B cell (primary cell): ENCODE measurements at regions of chr4 and their contacts with region 1.

Region 1: DNA sequence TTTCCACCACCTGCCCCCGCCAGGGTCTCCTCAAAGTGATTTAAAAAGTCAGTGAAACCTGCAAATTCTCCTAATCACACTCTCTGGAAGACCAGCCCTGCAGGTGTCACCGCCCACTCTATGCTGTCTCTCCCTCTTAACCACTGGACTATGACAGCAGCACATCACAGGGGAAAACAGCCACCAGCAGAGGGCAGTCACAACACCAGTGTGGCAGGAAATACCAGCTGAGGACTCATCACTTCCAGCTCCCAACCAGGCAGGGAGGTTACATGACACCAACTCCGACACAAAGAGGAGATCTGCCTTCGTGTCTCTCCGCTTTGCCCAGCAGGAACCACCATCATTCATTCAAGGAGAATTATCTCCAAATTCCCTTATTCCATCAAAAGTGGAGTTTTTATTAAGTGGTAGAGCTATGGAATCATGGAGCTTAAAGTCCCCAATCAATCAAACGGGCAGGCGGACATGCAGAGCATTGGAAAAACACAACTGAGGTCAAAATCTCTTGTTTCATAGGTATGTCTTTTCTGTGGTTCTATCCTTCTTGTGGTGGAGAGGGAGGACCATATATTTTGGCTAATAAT is 91.3 kb downstream of the NSUN7 start:
- DNase-seq: peak; percentile 79
- ATAC-seq: peak; percentile 57
- H3K4me3 ChIP-seq: peak overlapping the region in 1 of 5 experiments; percentile 37
- H3K4me3 Mint-ChIP-seq: peak overlapping the region; percentile 77
- H3K27ac ChIP-seq: peak overlapping the region; percentile 53 to 56
- H3K27ac Mint-ChIP-seq: peak overlapping the region; percentile 88
- H3K4me1 ChIP-seq: peaks cover 33 to 47% of the 10 kb centered on the region in 2 donors
- H3K4me1 Mint-ChIP-seq: peaks cover 42% of the 10 kb centered on the region
- H3K27me3 ChIP-seq: no peaks in the 10 kb centered on the region
- H3K27me3 Mint-ChIP-seq: peaks cover 2% of the 10 kb centered on the region
- CTCF ChIP-seq: peak; percentile 65

Region 2: DNA sequence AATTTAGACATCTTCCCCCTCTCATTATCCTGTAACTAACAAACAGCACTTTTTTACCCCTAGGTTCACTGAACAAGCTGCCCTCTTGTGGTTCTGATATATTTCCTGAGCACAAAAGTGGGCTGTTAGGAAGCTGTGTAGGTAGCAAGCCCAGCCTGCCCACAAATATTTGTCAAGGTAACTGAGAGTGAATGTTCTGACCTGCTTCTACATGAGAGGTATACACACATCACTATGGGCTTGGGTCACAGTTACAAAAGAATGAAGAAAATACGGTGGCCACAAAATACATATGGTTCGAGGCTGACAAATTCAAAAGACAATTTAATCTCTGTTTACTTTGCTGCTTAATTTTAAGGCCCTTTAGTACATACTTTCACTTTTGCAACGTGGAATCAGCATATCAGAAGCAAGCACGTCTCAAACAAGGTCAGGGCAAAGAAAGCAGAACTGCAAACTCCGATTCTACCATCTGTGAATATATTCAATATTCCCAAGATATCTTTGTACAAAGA is 290.1 kb before region 1 on chr4:
- CTCF ChIA-PET with region 1: no interaction called
- POLR2A ChIA-PET with region 1: no interaction called
- intact Hi-C with region 1: loop called (anchors 10 kb)
- DNase-seq: peak; percentile 80
- ATAC-seq: peak; percentile 82
- H3K4me3 ChIP-seq: peak overlapping the region; percentile 11 to 72 (median 56)
- H3K4me3 Mint-ChIP-seq: peak overlapping the region; percentile 84
- H3K27ac ChIP-seq: peak overlapping the region; percentile 77 to 84
- H3K27ac Mint-ChIP-seq: peak overlapping the region; percentile 88
- H3K4me1 ChIP-seq: peaks cover 17 to 21% of the 10 kb centered on the region in 2 donors
- H3K4me1 Mint-ChIP-seq: peaks cover 32% of the 10 kb centered on the region
- H3K27me3 ChIP-seq: no peaks in the 10 kb centered on the region
- H3K27me3 Mint-ChIP-seq: no peaks in the 10 kb centered on the region
- CTCF ChIP-seq: peak; percentile 59

Region 3: GRCh38 chr4:40607221-40607620 is 233.9 kb before region 1 on chr4:
- CTCF ChIA-PET with region 1: no interaction called
- POLR2A ChIA-PET with region 1: no interaction called
- intact Hi-C with region 1: no loop called
- DNase-seq: no peak
- ATAC-seq: no peak
- H3K4me3 ChIP-seq: no peak overlapping the region
- H3K4me3 Mint-ChIP-seq: no peak overlapping the region
- H3K27ac ChIP-seq: no peak overlapping the region
- H3K27ac Mint-ChIP-seq: no peak overlapping the region
- H3K4me1 ChIP-seq: no peaks in the 10 kb centered on the region
- H3K4me1 Mint-ChIP-seq: no peaks in the 10 kb centered on the region
- H3K27me3 ChIP-seq: no peaks in the 10 kb centered on the region
- H3K27me3 Mint-ChIP-seq: no peaks in the 10 kb centered on the region
- CTCF ChIP-seq: no peak

Region 4: DNA sequence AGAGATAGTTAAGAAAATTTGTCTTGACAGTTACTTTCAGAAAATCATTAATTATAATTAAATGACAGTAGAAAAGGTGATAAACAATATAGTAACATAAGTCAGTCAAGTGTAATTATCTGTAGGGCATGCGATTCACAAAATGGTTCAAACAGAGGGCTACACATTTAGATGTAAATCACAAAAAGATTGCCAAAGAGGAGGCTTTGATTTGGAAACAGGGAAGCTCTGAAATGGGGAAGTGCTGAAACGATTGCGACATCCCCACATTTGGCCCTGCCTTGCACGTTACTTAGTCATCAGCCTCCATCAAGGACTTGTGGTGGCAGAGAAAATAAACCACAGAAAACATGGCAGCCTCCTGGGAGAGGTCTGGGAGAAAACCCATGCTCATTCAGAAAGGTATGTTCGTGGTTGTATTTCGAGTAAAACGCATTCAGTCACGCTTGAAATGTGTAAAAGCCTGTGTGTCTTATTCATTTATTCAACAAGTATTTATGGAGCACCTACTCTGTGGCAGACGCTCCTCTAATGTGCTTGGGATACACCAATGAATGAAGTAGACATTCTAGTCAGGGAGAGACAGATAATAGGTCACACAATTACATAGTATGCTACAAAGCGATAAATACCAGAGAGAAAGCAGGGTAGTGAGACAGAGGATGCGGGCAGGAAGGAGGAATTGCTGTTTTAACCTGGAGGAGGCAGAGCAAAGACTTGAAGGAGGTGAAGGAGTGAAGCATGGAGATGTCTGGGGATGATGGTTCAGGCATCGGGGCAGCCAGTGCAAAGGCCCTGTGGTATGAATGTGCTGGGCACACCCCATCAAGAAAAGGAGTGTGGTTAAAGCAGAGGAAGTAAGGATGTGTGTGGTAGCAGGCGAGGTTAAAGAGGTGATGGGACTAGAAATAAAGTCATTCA is 219.2 kb before region 1 on chr4:
- CTCF ChIA-PET with region 1: no interaction called
- POLR2A ChIA-PET with region 1: no interaction called
- intact Hi-C with region 1: no loop called
- DNase-seq: peak; percentile 75
- ATAC-seq: peak; percentile 88
- H3K4me3 ChIP-seq: peak overlapping the region in 1 of 5 experiments; percentile 5
- H3K4me3 Mint-ChIP-seq: peak overlapping the region; percentile 47
- H3K27ac ChIP-seq: no peak overlapping the region
- H3K27ac Mint-ChIP-seq: peak overlapping the region; percentile 62
- H3K4me1 ChIP-seq: peaks cover 12 to 17% of the 10 kb centered on the region in 2 donors
- H3K4me1 Mint-ChIP-seq: peaks cover 14% of the 10 kb centered on the region
- H3K27me3 ChIP-seq: no peaks in the 10 kb centered on the region
- H3K27me3 Mint-ChIP-seq: peaks cover 3% of the 10 kb centered on the region
- CTCF ChIP-seq: no peak

Region 5: GRCh38 chr4:40749717-40750460 is 91.2 kb before region 1 on chr4 and contains the start of gene NSUN7:
- CTCF ChIA-PET with region 1: interaction called, 8 read pairs
- POLR2A ChIA-PET with region 1: interaction called, 4 read pairs
- intact Hi-C with region 1: loop called (anchors 5 kb)
- DNase-seq: peak; percentile 80
- ATAC-seq: peak; percentile 82
- H3K4me3 ChIP-seq: peak within 1 kb of the TSS; percentile 49 to 74 (median 61)
- H3K4me3 Mint-ChIP-seq: peak within 1 kb of the TSS; percentile 83
- H3K27ac ChIP-seq: peak within 1 kb of the TSS in 1 of 2 donors; percentile 56
- H3K27ac Mint-ChIP-seq: peak within 1 kb of the TSS; percentile 76
- H3K4me1 ChIP-seq: peaks cover 6 to 18% of the 10 kb centered on the region in 2 donors
- H3K4me1 Mint-ChIP-seq: peaks cover 12% of the 10 kb centered on the region
- H3K27me3 ChIP-seq: peaks cover 0 to 24% (median 10%) of the 10 kb centered on the region in 4 experiments
- H3K27me3 Mint-ChIP-seq: peaks cover 24% of the 10 kb centered on the region
- CTCF ChIP-seq: no peak
- total RNA-seq, gene NSUN7: 29.8 and 33.1 TPM in 2 replicates

Region 6: DNA sequence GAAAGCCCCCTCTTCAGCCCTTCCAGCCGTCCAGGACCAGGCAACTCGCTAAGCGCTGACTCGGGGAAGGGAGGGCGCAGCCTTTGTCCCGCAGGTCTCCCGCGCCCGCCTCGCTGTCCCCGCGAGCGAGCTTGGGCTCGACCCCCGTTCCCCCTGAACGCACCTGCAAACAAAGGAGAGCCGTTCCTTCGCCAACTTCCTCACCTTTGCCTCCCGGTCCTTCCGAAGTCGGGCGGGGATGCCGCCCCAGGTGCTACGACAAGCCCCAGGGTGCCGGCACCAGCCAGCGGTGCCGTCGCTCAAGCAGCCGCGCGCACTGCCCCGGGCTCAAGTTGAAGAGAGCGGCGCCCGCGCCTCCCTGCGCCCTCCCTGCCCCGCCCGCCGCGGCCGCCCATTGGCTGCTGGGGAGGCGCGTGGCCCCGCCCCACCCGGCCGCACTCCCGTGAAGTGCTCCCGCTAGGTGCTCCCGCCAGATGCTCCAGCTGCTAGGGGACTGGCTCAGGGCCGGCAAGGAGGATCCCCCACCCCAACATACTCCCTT is 15.8 kb after region 1 on chr4:
- CTCF ChIA-PET with region 1: interaction called, 39 read pairs
- POLR2A ChIA-PET with region 1: interaction called, 9 read pairs
- intact Hi-C with region 1: loop called (anchors 1 kb)
- DNase-seq: peak; percentile 78
- ATAC-seq: peak; percentile 95
- H3K4me3 ChIP-seq: peak overlapping the region; percentile 50 to 76 (median 69)
- H3K4me3 Mint-ChIP-seq: peak overlapping the region; percentile 88
- H3K27ac ChIP-seq: peak overlapping the region; percentile 40
- H3K27ac Mint-ChIP-seq: peak overlapping the region; percentile 76
- H3K4me1 ChIP-seq: peaks cover 19 to 32% of the 10 kb centered on the region in 2 donors
- H3K4me1 Mint-ChIP-seq: peaks cover 38% of the 10 kb centered on the region
- H3K27me3 ChIP-seq: peaks cover 0 to 19% (median 0%) of the 10 kb centered on the region in 4 experiments
- H3K27me3 Mint-ChIP-seq: peaks cover 20% of the 10 kb centered on the region
- CTCF ChIP-seq: no peak

Region 7: GRCh38 chr4:40924096-40924792 is 83.2 kb after region 1 on chr4:
- CTCF ChIA-PET with region 1: interaction called, 11 read pairs
- POLR2A ChIA-PET with region 1: no interaction called
- intact Hi-C with region 1: no loop called
- DNase-seq: peak; percentile 66
- ATAC-seq: peak; percentile 78
- H3K4me3 ChIP-seq: no peak overlapping the region
- H3K4me3 Mint-ChIP-seq: no peak overlapping the region
- H3K27ac ChIP-seq: no peak overlapping the region
- H3K27ac Mint-ChIP-seq: no peak overlapping the region
- H3K4me1 ChIP-seq: peaks cover 0 to 3% of the 10 kb centered on the region in 2 donors
- H3K4me1 Mint-ChIP-seq: peaks cover 3% of the 10 kb centered on the region
- H3K27me3 ChIP-seq: no peaks in the 10 kb centered on the region
- H3K27me3 Mint-ChIP-seq: peaks cover 7% of the 10 kb centered on the region
- CTCF ChIP-seq: peak; percentile 85

Region 8: GRCh38 chr4:41718907-41719306 is 877.8 kb after region 1 on chr4:
- CTCF ChIA-PET with region 1: no interaction called
- POLR2A ChIA-PET with region 1: no interaction called
- intact Hi-C with region 1: no loop called
- DNase-seq: no peak
- ATAC-seq: no peak
- H3K4me3 ChIP-seq: no peak overlapping the region
- H3K4me3 Mint-ChIP-seq: no peak overlapping the region
- H3K27ac ChIP-seq: no peak overlapping the region
- H3K27ac Mint-ChIP-seq: no peak overlapping the region
- H3K4me1 ChIP-seq: no peaks in the 10 kb centered on the region
- H3K4me1 Mint-ChIP-seq: no peaks in the 10 kb centered on the region
- H3K27me3 ChIP-seq: no peaks in the 10 kb centered on the region
- H3K27me3 Mint-ChIP-seq: peaks cover 23% of the 10 kb centered on the region
- CTCF ChIP-seq: no peak